Ascending aorta (tissue), 2 donors: ENCODE measurements at regions of chrX and their contacts with region 1.

Region 1: GRCh38 chrX:24150051-24150790 is 692 bp downstream of the ZFX start:
- DNase-seq: peak; percentile 71 to 95
- H3K4me3 ChIP-seq: peak overlapping the region; percentile 83 to 97
- H3K27ac ChIP-seq: peak overlapping the region; percentile 99 to 100
- H3K4me1 ChIP-seq: peaks cover 3 to 51% of the 10 kb centered on the region in 2 donors
- H3K27me3 ChIP-seq: no peaks in the 10 kb centered on the region
- CTCF ChIP-seq: peak; percentile 49 to 62 (median 57)

Region 2: DNA sequence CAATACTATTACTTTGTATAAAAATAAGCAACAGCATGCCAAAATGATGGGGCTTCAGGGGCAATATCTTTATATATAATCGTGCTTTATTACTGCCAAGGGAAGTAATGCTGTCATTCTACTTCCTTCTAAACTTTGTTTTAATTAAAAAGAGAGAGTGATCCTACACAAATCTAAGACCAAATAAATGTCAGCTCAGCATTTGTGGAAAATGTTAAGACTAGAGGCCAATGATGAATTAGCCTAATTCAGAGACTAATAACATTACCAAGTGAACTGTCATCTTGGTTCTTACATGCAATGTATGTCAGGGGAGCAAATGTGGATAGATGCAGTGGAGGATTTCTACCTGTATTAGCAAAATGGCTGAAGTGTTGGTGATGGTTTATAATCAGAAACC is 981.9 kb before region 1 on chrX:
- intact Hi-C with region 1: no loop called
- DNase-seq: no peak
- H3K4me3 ChIP-seq: no peak overlapping the region
- H3K27ac ChIP-seq: no peak overlapping the region
- H3K4me1 ChIP-seq: no peaks in the 10 kb centered on the region
- H3K27me3 ChIP-seq: no peaks in the 10 kb centered on the region
- CTCF ChIP-seq: no peak

Region 3: GRCh38 chrX:23317799-23318724 is 832.2 kb before region 1 on chrX:
- intact Hi-C with region 1: no loop called
- DNase-seq: no peak
- H3K4me3 ChIP-seq: no peak overlapping the region
- H3K27ac ChIP-seq: no peak overlapping the region
- H3K4me1 ChIP-seq: no peaks in the 10 kb centered on the region
- H3K27me3 ChIP-seq: no peaks in the 10 kb centered on the region
- CTCF ChIP-seq: peak; percentile 23 to 44 (median 33)

Region 4: GRCh38 chrX:24054182-24055042 is 95.8 kb before region 1 on chrX and contains the start of gene EIF2S3:
- intact Hi-C with region 1: loop called (anchors 1 kb)
- DNase-seq: peak; percentile 70 to 95
- H3K4me3 ChIP-seq: no peak within 1 kb of the TSS
- H3K27ac ChIP-seq: peak within 1 kb of the TSS; percentile 87 to 93
- H3K4me1 ChIP-seq: peaks cover 0 to 13% of the 10 kb centered on the region in 2 donors
- H3K27me3 ChIP-seq: no peaks in the 10 kb centered on the region
- CTCF ChIP-seq: peak; percentile 28 to 77 (median 62)
- total RNA-seq, gene EIF2S3: 60.7 TPM

Region 5: GRCh38 chrX:24133280-24133679 is 16.9 kb before region 1 on chrX:
- intact Hi-C with region 1: no loop called
- DNase-seq: no peak
- H3K4me3 ChIP-seq: no peak overlapping the region
- H3K27ac ChIP-seq: no peak overlapping the region
- H3K4me1 ChIP-seq: no peaks in the 10 kb centered on the region
- H3K27me3 ChIP-seq: no peaks in the 10 kb centered on the region
- CTCF ChIP-seq: no peak

Region 6: GRCh38 chrX:24169211-24169610 is 19.0 kb after region 1 on chrX:
- intact Hi-C with region 1: loop called (anchors 2 kb)
- DNase-seq: no peak
- H3K4me3 ChIP-seq: no peak overlapping the region
- H3K27ac ChIP-seq: peak overlapping the region in 1 of 2 donors; percentile 2
- H3K4me1 ChIP-seq: peaks cover 6 to 40% of the 10 kb centered on the region in 2 donors
- H3K27me3 ChIP-seq: no peaks in the 10 kb centered on the region
- CTCF ChIP-seq: no peak

Region 7: GRCh38 chrX:24204331-24204730 is 54.1 kb after region 1 on chrX:
- intact Hi-C with region 1: loop called (anchors 5 kb)
- DNase-seq: no peak
- H3K4me3 ChIP-seq: no peak overlapping the region
- H3K27ac ChIP-seq: no peak overlapping the region
- H3K4me1 ChIP-seq: peaks cover 7 to 16% of the 10 kb centered on the region in 2 donors
- H3K27me3 ChIP-seq: no peaks in the 10 kb centered on the region
- CTCF ChIP-seq: no peak

Region 8: DNA sequence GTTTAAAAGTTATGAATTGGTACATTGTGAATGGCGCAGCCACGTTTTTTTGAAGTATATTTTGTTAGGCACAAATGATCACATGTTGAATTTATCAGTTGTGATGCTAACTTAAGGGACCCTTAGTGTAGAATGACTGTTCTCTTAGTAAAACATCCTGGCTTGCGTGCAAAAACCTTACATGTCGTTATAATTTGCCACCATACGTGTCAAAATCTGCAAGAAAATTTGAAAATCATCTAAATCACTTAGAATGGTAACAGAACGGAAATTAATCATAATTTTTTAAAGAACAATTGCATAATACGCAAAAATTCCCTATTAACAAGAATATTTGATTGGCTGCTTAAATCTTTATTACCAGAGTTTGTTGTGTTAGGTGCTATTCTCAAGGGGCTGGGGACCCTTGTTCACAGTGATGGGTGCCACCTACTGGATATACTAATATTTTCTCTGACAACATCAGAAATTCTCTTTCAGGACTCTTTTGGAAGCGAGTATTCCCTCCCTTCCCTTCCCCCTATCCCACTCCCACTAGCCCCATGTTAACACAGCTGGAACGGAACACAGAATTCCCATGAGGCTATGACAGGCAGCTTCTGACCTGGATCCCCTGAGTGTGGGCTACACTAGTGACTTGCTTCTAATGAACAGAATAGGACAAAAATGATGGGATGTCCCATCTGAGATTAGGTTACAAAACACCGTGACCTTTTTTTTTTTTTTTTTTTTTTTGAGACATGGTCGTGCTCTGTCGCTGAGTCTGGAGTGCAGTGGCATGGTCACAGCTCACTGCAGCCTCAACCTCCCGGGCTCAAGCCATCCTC is 91.8 kb after region 1 on chrX:
- intact Hi-C with region 1: loop called (anchors 2 kb)
- DNase-seq: no peak
- H3K4me3 ChIP-seq: no peak overlapping the region
- H3K27ac ChIP-seq: no peak overlapping the region
- H3K4me1 ChIP-seq: peaks cover 0 to 4% of the 10 kb centered on the region in 2 donors
- H3K27me3 ChIP-seq: no peaks in the 10 kb centered on the region
- CTCF ChIP-seq: peak in 2 of 3 experiments; percentile 33 to 40